Colonic mucosa (tissue), 4 donors: ENCODE measurements at regions of chr11 and their contacts with region 1.

Region 1: GRCh38 chr11:131246663-131247062 is 123.8 kb upstream of the NTM start:
- DNase-seq: peak; percentile 45
- H3K4me3 ChIP-seq: no peak overlapping the region
- H3K27ac ChIP-seq: no peak overlapping the region
- H3K4me1 ChIP-seq: no peaks in the 10 kb centered on the region
- H3K27me3 ChIP-seq: no peaks in the 10 kb centered on the region
- CTCF ChIP-seq: peak; percentile 40

Region 2: GRCh38 chr11:130561441-130561881 is 685.2 kb before region 1 on chr11:
- intact Hi-C with region 1: no loop called
- DNase-seq: no peak
- H3K4me3 ChIP-seq: no peak overlapping the region
- H3K27ac ChIP-seq: no peak overlapping the region
- H3K4me1 ChIP-seq: no peaks in the 10 kb centered on the region
- H3K27me3 ChIP-seq: no peaks in the 10 kb centered on the region
- CTCF ChIP-seq: no peak

Region 3: DNA sequence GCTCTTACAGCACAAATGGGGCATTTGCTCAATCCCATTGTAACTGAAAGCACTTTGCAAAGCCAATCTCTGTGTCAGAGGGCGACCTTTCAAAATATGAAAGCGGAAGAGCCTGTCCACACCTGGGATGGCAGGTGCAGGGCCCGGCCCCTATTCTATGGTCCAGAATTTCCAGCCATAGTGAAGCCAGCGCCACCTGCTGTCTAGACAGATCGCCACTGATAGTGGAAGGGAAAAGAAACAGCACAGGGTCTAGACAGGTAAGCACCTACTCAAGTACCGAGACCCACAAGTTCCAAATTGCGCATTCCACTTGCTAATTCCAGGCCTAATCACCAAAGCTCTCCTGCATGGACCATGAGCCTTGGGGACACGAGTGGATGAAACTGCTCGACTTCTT is 265.1 kb after region 1 on chr11:
- intact Hi-C with region 1: loop called (anchors 2 kb)
- DNase-seq: peak; percentile 50
- H3K4me3 ChIP-seq: no peak overlapping the region
- H3K27ac ChIP-seq: no peak overlapping the region
- H3K4me1 ChIP-seq: no peaks in the 10 kb centered on the region
- H3K27me3 ChIP-seq: no peaks in the 10 kb centered on the region
- CTCF ChIP-seq: peak; percentile 37